Upper lobe of right lung (tissue), 1 donor: ENCODE measurements at regions of chr1 and their contacts with region 1.

Region 1: GRCh38 chr1:93629099-93630059 is 52.3 kb downstream of the BCAR3 start:
- DNase-seq: no peak
- ATAC-seq: peak; percentile 88
- H3K4me3 ChIP-seq: no peak overlapping the region
- H3K27ac ChIP-seq: no peak overlapping the region
- H3K4me1 ChIP-seq: peaks cover 12% of the 10 kb centered on the region
- H3K27me3 ChIP-seq: no peaks in the 10 kb centered on the region
- CTCF ChIP-seq: peak; percentile 85

Region 2: GRCh38 chr1:93395195-93395594 is 234.2 kb before region 1 on chr1:
- intact Hi-C with region 1: no loop called
- DNase-seq: no peak
- ATAC-seq: no peak
- H3K4me3 ChIP-seq: no peak overlapping the region
- H3K27ac ChIP-seq: no peak overlapping the region
- H3K4me1 ChIP-seq: no peaks in the 10 kb centered on the region
- H3K27me3 ChIP-seq: no peaks in the 10 kb centered on the region
- CTCF ChIP-seq: no peak

Region 3: DNA sequence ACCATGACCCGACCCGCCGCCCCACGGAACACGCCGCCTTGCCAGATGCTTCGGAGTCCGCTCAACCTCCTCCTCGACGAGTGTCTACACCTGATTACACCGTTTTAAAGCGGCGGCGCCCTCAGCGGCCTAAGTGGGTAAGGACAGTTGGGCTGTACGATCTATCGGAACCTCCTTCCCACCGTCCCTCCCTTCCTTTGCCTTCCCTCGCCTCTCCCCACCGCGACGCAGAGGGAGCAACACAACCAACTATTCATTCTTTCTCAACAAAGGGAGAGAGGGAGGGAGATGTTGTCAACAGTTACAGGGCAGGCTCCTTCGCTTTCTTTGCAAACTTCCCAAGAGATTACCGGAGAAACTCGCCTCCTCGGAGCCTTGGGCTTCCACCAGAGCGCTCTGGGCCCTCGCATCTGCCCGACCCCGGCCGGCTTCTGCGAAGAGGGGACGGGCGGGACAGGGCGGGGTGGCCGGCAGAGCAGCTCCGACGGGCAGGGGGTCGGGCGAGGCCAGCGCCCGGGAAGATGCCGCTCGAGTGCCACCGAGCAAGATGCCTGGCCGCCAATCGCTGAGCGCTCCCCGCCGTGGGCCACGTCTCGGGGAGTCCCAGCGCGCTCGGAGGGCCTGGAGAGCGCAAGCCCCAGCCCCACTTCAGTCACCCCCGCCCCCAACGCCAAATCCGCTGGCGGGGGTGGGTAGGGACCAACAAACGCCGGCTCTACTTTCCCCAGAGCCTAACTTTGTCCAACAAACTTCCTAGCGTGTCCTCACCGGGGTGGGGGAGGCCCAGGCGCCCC is 51.6 kb after region 1 on chr1:
- intact Hi-C with region 1: loop called (anchors 10 kb)
- DNase-seq: peak; percentile 89
- ATAC-seq: peak; percentile 90
- H3K4me3 ChIP-seq: peak overlapping the region; percentile 84
- H3K27ac ChIP-seq: peak overlapping the region; percentile 88
- H3K4me1 ChIP-seq: peaks cover 25% of the 10 kb centered on the region
- H3K27me3 ChIP-seq: no peaks in the 10 kb centered on the region
- CTCF ChIP-seq: peak; percentile 58

Region 4: GRCh38 chr1:93814059-93814794 is 184.8 kb after region 1 on chr1:
- intact Hi-C with region 1: loop called (anchors 5 kb)
- DNase-seq: no peak
- ATAC-seq: peak; percentile 90
- H3K4me3 ChIP-seq: no peak overlapping the region
- H3K27ac ChIP-seq: no peak overlapping the region
- H3K4me1 ChIP-seq: peaks cover 36% of the 10 kb centered on the region
- H3K27me3 ChIP-seq: no peaks in the 10 kb centered on the region
- CTCF ChIP-seq: peak; percentile 95